Activated B cell treated with CpG ODN at 0.5 μM for 24 hours (primary cell): ENCODE measurements at regions of chr10 and their contacts with region 1.

Region 1: GRCh38 chr10:113879691-113880090 is 25.2 kb downstream of the NHLRC2 start:
- DNase-seq: no peak
- ATAC-seq: no peak
- H3K4me3 Mint-ChIP-seq: no peak overlapping the region
- H3K27ac Mint-ChIP-seq: no peak overlapping the region
- H3K4me1 Mint-ChIP-seq: peaks cover 19% of the 10 kb centered on the region
- H3K27me3 Mint-ChIP-seq: no peaks in the 10 kb centered on the region
- CTCF ChIP-seq: no peak

Region 2: DNA sequence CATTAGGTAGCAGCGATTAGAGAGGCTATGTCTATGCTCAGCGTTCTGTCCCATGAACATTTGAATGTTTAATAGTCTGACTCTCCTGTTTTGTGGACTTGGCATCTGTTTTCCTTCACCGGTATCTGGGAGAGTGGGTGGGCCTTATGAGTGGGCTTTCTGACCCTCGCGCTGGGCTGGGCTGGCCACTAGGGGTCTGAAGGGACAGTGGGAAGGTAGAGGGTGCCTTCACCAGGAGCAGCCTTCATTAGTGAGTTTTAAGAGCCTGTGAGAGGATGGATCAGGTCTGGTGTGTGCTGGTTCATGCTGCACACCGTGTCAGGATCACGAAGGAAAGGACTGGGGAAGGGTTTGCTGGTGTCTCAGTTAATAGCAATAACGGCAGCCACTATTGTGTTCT is 59.2 kb before region 1 on chr10:
- CTCF ChIA-PET with region 1: no interaction called
- POLR2A ChIA-PET with region 1: no interaction called
- intact Hi-C with region 1: no loop called
- DNase-seq: no peak
- ATAC-seq: no peak
- H3K4me3 Mint-ChIP-seq: no peak overlapping the region
- H3K27ac Mint-ChIP-seq: no peak overlapping the region
- H3K4me1 Mint-ChIP-seq: no peaks in the 10 kb centered on the region
- H3K27me3 Mint-ChIP-seq: peaks cover 7% of the 10 kb centered on the region
- CTCF ChIP-seq: no peak

Region 3: DNA sequence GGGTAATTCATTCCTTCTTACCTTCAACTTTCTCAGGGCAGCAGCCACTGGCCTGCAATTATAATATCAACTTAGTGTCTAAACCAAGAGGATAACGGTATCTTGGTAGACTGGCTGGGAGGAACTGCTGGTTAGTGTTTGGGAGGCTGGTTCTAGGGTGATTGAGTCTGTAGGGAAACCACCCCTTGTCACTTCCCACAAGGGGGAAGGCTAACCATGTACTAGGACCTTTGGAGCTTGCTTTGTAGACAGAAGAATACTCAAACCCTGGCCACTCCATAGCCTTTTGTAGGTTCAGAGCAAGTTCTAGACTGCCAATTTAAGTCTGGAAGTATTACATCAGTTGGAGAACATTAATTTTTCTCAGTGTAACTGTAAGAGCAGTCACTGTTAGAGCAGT is 26.1 kb after region 1 on chr10:
- CTCF ChIA-PET with region 1: no interaction called
- POLR2A ChIA-PET with region 1: no interaction called
- intact Hi-C with region 1: loop called (anchors 2 kb)
- DNase-seq: no peak
- ATAC-seq: no peak
- H3K4me3 Mint-ChIP-seq: no peak overlapping the region
- H3K27ac Mint-ChIP-seq: no peak overlapping the region
- H3K4me1 Mint-ChIP-seq: no peaks in the 10 kb centered on the region
- H3K27me3 Mint-ChIP-seq: no peaks in the 10 kb centered on the region
- CTCF ChIP-seq: no peak